SK-MEL-5 (cell line): ENCODE measurements at regions of chr9 and their contacts with region 1.

Region 1: GRCh38 chr9:123102375-123103110 is 69.1 kb downstream of the GPR21 start:
- DNase-seq: peak; percentile 8

Region 2: DNA sequence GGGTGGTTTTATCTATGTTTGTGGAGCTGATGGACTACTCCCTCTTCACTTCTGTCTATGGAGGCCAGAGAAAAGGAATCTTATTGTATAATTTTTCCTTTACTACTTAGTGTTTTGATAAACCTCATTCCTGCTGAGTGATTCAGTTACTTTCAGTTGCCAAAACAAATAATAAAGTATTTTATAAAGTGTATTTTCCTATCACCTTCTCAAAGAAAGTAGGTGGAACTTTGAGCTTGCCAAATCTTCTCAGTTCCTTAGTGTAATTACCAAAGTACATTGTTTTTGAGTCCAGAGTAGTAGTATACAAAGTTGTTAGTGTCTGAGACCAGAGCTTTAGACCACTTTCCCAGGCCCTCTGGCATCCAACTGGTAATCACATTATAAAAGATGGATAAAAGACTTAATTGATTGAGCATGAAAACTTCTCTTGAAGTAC is 148.3 kb before region 1 on chr9:
- in situ Hi-C with region 1: no loop called
- DNase-seq: peak; percentile 17

Region 3: GRCh38 chr9:123349691-123350480 is 247.3 kb after region 1 on chr9:
- in situ Hi-C with region 1: loop called (anchors 25 kb)
- DNase-seq: peak; percentile 75

Region 4: GRCh38 chr9:123389070-123389469 is 286.5 kb after region 1 on chr9:
- in situ Hi-C with region 1: no loop called
- DNase-seq: no peak